HAP-1 (cell line): ENCODE measurements at regions of chr7 and their contacts with region 1.

Region 1: GRCh38 chr7:90455163-90456030 is 14.0 kb upstream of the PTTG1IP2 start:
- DNase-seq: peak; percentile 32 to 75
- H3K4me3 ChIP-seq: no peak overlapping the region; the same call in 1 of the 2 replicates
- H3K4me1 ChIP-seq: peaks cover 12% of the 10 kb centered on the region
- H3K27me3 ChIP-seq: no peaks in the 10 kb centered on the region

Region 2: GRCh38 chr7:91034459-91035368 is 579.3 kb after region 1 on chr7:
- in situ Hi-C with region 1: loop called (anchors 25 kb)
- DNase-seq: peak; percentile 39 to 74
- H3K4me3 ChIP-seq: no peak overlapping the region
- H3K4me1 ChIP-seq: no peaks in the 10 kb centered on the region
- H3K27me3 ChIP-seq: no peaks in the 10 kb centered on the region